ENCODE measurements at regions of chr11 and their contacts with region 1.

Region 1: DNA sequence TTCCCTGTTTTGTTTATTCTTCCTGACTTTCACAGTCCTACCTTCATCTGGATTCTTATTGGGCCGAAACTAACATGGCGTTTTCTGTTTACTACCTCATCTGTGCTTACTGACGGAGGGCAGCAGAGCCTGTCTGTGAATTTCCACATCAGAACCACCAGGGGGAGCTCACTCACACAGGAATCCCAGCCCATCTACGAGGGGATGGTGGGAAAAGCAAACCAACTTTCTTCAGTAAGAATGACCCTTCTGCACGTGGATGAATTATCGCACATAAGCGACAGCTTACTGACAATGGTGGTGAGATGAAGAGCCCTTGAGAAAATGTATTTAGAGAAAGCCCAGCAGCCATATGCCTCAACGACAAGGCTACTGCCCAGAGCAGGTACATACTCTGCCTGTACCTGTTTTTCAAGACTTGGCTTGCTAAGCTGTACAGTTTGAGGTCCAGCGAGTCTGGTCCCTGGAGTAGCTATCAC is 42.5 kb downstream of the LARGE2 start:
- DNase-seq: no peak
- H3K4me3 ChIP-seq: no peak overlapping the region
- CTCF ChIP-seq: peak; percentile 88

Region 2: DNA sequence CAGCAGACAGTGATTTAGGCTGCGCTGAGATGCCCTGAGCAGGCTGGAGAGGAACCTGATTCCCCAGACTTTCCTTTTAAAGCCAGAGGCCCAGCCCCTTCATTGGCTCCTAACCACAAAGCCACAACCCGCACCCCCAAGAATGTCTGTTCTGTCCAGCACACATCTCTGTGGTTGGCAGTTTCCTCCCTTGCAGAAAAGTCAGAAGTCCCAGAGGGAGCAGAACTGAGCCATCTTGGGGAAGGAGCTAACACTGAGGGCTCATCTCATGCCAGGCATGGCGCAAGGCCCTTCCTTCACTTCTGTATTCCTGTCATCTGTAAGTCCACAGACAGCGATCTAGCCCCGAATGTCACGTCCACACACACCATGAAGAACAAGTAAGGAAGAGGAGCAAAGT is 581.7 kb before region 1 on chr11:
- CTCF ChIA-PET with region 1: no interaction called
- POLR2A ChIA-PET with region 1: no interaction called
- DNase-seq: peak; percentile 31
- H3K4me3 ChIP-seq: no peak overlapping the region
- CTCF ChIP-seq: no peak

Region 3: DNA sequence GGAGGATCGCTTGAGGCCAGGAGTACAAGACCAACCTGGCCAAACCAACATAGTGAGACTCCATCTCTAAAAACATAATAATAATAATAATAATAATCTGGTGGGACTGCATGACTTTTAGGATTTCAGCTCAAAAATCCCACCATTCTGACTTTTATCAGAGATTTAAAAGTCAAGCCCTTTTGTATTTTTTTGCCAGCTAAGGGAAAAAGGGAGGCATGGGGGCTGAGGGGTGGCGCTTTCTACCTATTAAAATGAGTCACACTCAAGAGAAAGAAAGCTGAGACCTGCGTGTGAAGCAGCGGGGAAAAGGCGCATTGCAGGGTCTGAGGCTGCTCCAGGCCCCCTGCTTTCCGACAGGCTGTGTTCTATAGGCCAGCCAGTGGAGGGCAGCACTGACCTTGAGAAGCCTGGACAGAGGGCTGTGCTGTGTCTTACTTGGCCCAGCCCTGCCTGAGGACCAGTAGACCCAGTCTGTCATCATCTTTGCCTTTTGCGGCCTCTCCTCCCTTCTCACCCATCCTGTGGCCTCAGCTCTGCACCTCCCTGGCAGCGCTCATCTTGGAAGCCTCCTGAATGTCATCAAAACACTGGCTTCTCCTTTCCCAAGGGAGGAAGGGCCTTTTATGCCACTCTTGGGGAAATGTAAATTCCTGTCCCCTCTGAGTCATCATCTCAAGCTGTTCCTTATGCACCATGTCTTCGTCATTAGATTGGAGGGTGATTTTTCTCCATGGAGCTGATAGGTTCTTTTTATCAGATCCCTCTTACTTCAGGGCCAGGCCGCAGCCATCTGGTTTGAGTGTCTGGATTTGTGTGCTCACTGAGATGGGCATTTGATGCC is 92.2 kb before region 1 on chr11:
- CTCF ChIA-PET with region 1: interaction called, 14 read pairs
- POLR2A ChIA-PET with region 1: no interaction called
- DNase-seq: peak; percentile 72
- H3K4me3 ChIP-seq: no peak overlapping the region
- CTCF ChIP-seq: peak; percentile 87

Region 4: GRCh38 chr11:45939836-45940235 is 25.1 kb before region 1 on chr11:
- CTCF ChIA-PET with region 1: interaction called, 122 read pairs
- POLR2A ChIA-PET with region 1: no interaction called
- DNase-seq: no peak
- H3K4me3 ChIP-seq: no peak overlapping the region
- CTCF ChIP-seq: no peak

Region 5: DNA sequence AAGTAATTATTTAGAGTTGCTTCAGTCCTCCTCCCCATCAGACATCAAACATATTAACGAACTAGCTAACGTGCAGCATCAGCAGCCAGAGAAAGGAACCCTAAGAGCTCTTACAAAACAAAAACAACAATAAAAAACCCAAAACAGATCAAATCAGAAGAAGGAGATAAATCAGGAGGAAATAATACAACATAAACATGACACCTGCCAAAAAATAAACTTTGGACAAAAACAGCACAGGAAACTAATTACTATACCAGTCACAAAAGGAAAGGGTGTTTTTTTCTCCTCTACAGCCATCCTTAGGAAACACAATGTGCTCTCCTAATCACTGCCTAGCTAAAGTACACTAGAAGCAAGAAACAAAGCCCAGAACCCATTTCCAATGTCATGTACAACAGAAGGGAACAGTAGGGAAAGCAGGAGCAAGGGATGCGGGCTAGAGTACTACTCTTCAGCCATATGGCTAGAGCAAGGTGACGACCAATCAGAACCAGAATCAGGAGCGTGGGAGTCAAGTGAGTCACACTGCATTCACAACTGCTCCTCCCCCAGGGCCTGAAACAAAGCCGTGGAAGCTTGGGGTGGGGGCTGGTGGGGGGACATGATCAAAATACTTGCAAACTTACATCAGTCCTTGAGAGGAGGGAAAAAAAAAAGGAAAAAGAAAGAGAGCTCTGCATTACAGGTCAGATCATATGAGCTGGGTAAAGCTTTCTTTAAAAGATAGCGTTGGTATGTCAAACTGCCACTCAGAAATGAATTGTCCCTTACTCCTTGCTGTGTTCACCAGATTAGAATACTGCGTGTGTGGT is 17.9 kb after region 1 on chr11:
- CTCF ChIA-PET with region 1: interaction called, 126 read pairs
- POLR2A ChIA-PET with region 1: interaction called, 5 read pairs
- DNase-seq: peak; percentile 62
- H3K4me3 ChIP-seq: no peak overlapping the region
- CTCF ChIP-seq: no peak

Region 6: GRCh38 chr11:46006418-46007070 is 41.6 kb after region 1 on chr11:
- CTCF ChIA-PET with region 1: interaction called, 332 read pairs
- POLR2A ChIA-PET with region 1: no interaction called
- DNase-seq: no peak
- H3K4me3 ChIP-seq: no peak overlapping the region
- CTCF ChIP-seq: peak; percentile 61

Region 7: DNA sequence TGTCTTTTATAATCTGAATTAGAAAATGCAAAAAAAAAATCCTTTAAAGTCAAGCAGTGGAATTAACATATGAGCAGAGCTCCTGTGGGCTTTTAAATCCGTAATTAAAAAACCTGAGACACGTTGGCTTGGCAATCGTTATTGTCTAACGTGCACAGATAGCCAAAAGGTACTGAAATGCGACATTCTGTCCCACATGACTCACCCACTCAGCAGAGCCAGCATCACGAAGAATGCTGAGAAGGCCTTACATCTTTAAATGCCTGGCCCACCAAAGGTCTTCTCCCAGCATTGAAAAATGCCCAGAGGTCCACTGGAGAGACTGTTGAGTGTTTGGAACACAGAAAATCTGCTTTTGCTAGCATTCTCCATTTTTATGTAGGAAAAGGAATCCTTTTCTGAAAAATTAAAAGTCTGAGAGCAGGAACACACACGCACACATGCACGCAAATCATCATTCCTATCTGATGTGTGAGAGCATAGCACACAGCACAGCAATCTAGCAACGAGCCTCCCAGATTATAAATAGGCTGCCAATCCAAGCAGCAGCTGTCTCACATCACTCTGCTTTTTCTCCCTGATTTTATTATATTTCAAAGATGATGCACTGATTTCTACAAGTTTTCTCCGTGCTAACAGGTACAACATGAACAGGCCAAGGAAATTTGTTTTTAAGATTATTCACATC is 61.8 kb after region 1 on chr11:
- CTCF ChIA-PET with region 1: interaction called, 13 read pairs
- POLR2A ChIA-PET with region 1: no interaction called
- DNase-seq: no peak
- H3K4me3 ChIP-seq: no peak overlapping the region
- CTCF ChIP-seq: no peak

Region 8: DNA sequence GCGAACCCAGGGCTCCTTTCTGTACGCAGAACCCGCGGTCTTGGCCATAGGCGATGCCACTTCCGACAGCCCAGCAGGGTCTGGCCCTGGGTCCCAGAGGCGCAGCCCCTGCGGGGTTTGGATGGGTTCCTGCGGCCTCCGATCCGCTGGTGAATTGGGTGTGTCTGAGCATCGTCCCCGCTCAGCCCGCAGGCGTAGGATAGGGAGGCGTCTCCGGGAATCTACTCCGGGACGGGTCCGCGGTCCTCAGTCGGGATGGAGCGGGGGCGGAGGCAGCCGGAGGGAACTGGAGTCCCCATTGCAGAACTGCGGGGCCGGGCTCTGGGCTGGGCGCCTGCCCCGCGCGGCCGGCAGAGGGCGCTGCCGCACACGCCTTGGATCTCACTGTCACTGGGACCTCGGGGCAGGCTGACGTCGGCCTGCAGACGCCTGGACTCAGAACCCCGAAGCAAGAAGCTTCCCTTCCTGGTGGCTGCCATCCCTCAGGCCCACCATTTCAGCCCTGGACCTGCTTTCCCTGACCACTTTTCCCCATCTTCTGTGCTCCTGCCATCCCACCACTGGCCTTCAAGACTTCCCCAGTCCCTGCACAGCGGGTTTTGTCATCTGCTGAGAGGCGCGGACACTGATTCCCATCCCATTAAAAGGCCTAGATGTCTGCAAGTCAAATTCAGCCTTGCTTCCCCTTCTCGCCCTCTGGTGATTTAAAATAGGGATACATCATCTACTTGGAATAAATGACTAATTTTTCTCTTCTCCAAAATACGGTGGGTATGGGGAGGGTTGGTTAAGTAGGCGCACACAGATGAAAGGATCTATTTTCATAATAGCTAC is 274.2 kb after region 1 on chr11:
- CTCF ChIA-PET with region 1: interaction called, 19 read pairs
- POLR2A ChIA-PET with region 1: no interaction called
- DNase-seq: no peak
- H3K4me3 ChIP-seq: peak overlapping the region; percentile 53
- CTCF ChIP-seq: peak; percentile 90